ENCODE measurements at regions of chr12 and their contacts with region 1.

Region 1: GRCh38 chr12:108514973-108515814 is at the start of gene FICD:
- DNase-seq: peak; percentile 99
- ATAC-seq: peak; percentile 88
- H3K4me3 ChIP-seq: peak within 1 kb of the TSS; percentile 90
- H3K27ac ChIP-seq: no peak within 1 kb of the TSS
- H3K4me1 ChIP-seq: peaks cover 11% of the 10 kb centered on the region; the same call in 1 of the 2 replicates
- H3K27me3 ChIP-seq: no peaks in the 10 kb centered on the region
- CTCF ChIP-seq: no peak
- total RNA-seq, gene FICD: 6.4 and 18.5 TPM in 2 replicates

Region 2: DNA sequence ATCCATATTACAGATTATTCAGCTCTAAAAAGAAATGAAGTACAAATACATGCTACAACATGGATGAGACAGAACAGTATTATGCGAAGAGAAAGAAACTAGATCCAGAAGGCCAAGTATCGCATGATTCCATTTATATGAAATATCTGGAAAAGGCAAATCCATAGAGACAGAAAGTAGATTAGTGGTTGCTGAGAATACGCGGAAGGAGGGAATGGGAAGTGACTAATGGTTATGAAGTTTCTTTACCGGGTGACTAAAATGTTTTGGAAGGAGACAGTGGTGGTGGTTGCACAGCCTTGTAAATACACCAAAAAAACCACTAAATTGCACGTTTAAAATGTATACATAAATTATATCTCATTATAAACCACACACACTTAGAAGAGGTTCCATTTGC is 766.7 kb before region 1 on chr12:
- CTCF ChIA-PET with region 1: no interaction called
- POLR2A ChIA-PET with region 1: no interaction called
- intact Hi-C with region 1: loop called (anchors 10 kb)
- DNase-seq: peak; percentile 91
- ATAC-seq: peak; percentile 80
- H3K4me3 ChIP-seq: peak overlapping the region; percentile 46
- H3K27ac ChIP-seq: peak overlapping the region; percentile 76
- H3K4me1 ChIP-seq: peaks cover 56% of the 10 kb centered on the region
- H3K27me3 ChIP-seq: no peaks in the 10 kb centered on the region
- CTCF ChIP-seq: no peak

Region 3: GRCh38 chr12:107992870-107993451 is 522.2 kb before region 1 on chr12:
- CTCF ChIA-PET with region 1: no interaction called
- POLR2A ChIA-PET with region 1: interaction called, 3 read pairs
- intact Hi-C with region 1: loop called (anchors 1 kb)
- DNase-seq: peak; percentile 66
- ATAC-seq: peak; percentile 78
- H3K4me3 ChIP-seq: no peak overlapping the region
- H3K27ac ChIP-seq: no peak overlapping the region
- H3K4me1 ChIP-seq: no peaks in the 10 kb centered on the region
- H3K27me3 ChIP-seq: peaks cover 12% of the 10 kb centered on the region; the same call in 1 of the 2 replicates
- CTCF ChIP-seq: peak; percentile 69

Region 4: DNA sequence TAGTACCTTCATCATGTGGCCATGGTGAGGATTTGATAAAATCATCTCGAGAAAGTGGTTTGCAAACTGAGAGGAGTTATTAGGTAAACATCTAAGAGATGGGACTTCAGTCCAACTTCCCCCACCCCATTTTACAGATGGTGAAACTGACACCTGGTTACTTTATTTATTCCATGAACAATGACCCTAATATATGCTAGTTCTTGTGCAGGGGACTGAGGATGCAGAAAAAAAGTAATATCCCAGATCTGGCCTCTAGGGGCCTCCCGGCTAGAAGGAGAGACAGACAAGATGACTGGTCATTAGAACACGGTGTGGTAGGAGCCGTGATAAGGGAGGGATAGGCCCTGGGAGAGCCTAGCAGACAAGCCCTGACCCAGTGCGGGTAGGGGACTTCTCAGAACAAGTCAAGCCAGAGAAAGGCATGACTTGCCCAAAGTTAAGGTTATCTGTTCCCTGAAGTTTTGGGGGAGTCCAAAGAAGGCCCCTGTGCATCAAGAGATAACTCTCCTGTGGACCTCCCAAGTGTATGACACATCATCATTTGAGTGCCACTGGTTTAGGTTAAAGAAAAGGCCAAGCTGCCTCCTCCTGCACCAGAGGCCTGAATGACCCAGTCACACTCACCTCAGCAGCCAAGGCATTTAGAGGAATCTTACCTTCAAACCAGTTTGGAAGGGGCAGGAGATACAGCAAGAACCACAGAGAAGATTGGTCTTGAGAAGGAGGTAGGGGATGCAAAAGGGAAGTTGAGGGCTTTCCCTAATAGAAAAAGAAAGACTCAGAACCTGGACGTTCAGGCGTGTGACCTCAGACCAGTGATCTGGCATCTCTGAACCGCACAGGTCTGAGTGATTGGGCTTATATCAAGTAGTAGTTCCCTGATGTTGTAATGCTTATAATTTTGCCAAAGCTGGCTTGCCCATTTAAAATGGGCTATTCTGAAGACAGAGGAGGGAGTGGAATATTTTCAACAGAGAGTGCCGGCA is 177.7 kb before region 1 on chr12:
- CTCF ChIA-PET with region 1: no interaction called
- POLR2A ChIA-PET with region 1: no interaction called
- intact Hi-C with region 1: loop called (anchors 1 kb)
- DNase-seq: peak; percentile 56
- ATAC-seq: peak; percentile 88
- H3K4me3 ChIP-seq: no peak overlapping the region
- H3K27ac ChIP-seq: no peak overlapping the region
- H3K4me1 ChIP-seq: no peaks in the 10 kb centered on the region
- H3K27me3 ChIP-seq: peaks cover 47% of the 10 kb centered on the region
- CTCF ChIP-seq: peak; percentile 81

Region 5: GRCh38 chr12:108551535-108551934 is 36.3 kb after region 1 on chr12:
- CTCF ChIA-PET with region 1: no interaction called
- POLR2A ChIA-PET with region 1: no interaction called
- intact Hi-C with region 1: no loop called
- DNase-seq: no peak
- ATAC-seq: no peak
- H3K4me3 ChIP-seq: no peak overlapping the region
- H3K27ac ChIP-seq: no peak overlapping the region
- H3K4me1 ChIP-seq: no peaks in the 10 kb centered on the region
- H3K27me3 ChIP-seq: no peaks in the 10 kb centered on the region
- CTCF ChIP-seq: no peak

Region 6: GRCh38 chr12:108731105-108731865 is 216.1 kb after region 1 on chr12 and contains the start of gene CORO1C:
- CTCF ChIA-PET with region 1: no interaction called
- POLR2A ChIA-PET with region 1: no interaction called
- intact Hi-C with region 1: no loop called
- DNase-seq: peak; percentile 99
- ATAC-seq: peak; percentile 53
- H3K4me3 ChIP-seq: peak within 1 kb of the TSS; percentile 68
- H3K27ac ChIP-seq: peak within 1 kb of the TSS; percentile 87
- H3K4me1 ChIP-seq: peaks cover 57% of the 10 kb centered on the region
- H3K27me3 ChIP-seq: no peaks in the 10 kb centered on the region
- CTCF ChIP-seq: peak; percentile 83
- total RNA-seq, gene CORO1C: 159 and 179 TPM in 2 replicates